ENCODE measurements at regions of chr20 and their contacts with region 1.

Region 1: DNA sequence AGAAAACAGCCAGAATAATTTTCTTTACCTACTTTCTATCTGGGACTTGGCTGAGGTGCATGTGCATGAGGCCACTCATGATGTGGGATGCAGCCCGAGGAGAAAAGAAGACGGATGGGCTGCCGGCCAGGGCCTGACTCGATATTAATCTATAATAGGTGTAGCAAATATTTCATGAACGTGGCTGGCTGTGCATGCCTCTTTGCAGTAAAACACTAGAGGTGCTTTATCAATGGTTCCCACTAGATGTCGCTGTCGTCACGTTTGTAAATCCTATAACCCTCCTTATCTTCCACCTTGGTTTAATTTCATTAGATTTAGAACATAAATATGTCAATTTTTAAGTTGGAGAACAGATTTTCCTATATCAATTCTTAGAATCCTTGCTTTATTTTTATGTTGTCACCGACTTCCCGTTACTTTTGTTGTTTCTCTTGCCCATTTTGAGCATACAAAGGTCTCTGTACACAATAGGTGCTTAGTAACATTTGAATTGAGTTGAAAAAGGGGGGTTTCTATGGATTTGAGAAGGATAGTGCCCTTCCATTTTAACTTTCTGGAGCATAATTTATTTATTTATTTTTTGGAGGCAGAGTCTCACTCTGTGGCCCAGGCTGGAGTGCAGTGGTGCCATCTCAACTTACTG is 19.6 kb upstream of the FERMT1 start:
- DNase-seq: peak; percentile 52
- H3K4me3 ChIP-seq: no peak overlapping the region
- H3K27ac ChIP-seq: no peak overlapping the region
- H3K4me1 ChIP-seq: no peaks in the 10 kb centered on the region
- H3K27me3 ChIP-seq: no peaks in the 10 kb centered on the region
- CTCF ChIP-seq: peak; percentile 70 to 88 (median 83)
- EP300 ChIP-seq: no peak
- POLR2A ChIP-seq: no peak

Region 2: DNA sequence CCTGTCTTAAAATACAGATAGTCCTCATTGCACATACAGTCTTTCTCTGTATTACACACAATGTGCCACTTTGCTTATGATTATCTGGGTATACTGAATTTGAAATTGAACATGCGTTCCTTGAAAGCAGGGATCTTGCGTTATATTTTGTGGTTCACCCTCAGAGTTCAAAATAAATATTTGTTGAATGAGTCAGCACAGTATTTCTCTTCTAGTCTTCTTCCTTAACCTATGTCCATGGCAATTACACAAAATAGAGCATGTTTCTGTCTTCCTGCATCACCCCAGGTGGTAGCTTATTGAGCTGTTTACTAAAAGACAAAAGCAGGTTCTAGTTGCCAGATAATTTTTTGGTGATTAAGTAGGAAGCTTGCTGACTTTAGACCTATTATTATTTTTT is 253.2 kb after region 1 on chr20:
- in situ Hi-C with region 1: no loop called
- intact Hi-C with region 1: loop called (anchors 5 kb)
- DNase-seq: no peak
- H3K4me3 ChIP-seq: no peak overlapping the region
- H3K27ac ChIP-seq: no peak overlapping the region
- H3K4me1 ChIP-seq: no peaks in the 10 kb centered on the region
- H3K27me3 ChIP-seq: no peaks in the 10 kb centered on the region
- CTCF ChIP-seq: no peak
- EP300 ChIP-seq: no peak
- POLR2A ChIP-seq: no peak

Region 3: GRCh38 chr20:6583134-6583738 is 440.8 kb after region 1 on chr20:
- in situ Hi-C with region 1: loop called in 1 of 4 experiments (anchors 25 kb)
- intact Hi-C with region 1: no loop called
- DNase-seq: peak; percentile 22
- H3K4me3 ChIP-seq: no peak overlapping the region
- H3K27ac ChIP-seq: no peak overlapping the region
- H3K4me1 ChIP-seq: no peaks in the 10 kb centered on the region
- H3K27me3 ChIP-seq: no peaks in the 10 kb centered on the region
- CTCF ChIP-seq: peak; percentile 53 to 68 (median 61)
- EP300 ChIP-seq: no peak
- POLR2A ChIP-seq: no peak

Region 4: DNA sequence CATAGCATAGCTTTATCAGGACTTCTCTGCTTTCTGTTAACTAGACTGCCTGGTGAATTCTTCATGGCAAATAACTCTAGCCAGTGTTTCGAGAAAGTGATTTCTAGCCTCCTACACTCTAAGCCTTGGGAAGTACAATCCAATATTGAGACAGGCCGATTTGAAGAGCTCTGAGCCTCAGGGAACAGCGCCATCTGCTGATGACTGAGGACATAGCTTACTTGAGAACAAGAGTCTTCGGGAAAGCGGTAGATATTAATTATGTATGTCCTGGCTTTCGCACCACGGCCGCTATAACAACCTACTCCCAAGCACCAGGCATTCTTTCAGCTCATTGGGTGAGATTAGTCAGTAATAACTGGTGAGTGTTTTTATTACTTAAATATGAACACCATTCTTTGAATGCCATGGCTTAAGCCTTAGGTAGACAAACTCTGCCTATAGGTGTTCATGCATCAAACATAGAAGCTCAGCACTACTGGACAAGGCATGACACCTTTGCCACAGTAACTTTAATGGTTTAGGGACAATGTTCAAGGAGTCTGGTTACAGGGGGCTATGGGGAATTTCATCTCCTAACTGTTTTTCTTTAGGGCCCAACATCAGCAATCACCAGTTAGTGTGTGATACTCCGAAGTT is 1143.6 kb after region 1 on chr20:
- in situ Hi-C with region 1: loop called in 1 of 4 experiments (anchors 10 kb)
- intact Hi-C with region 1: no loop called
- DNase-seq: peak; percentile 67
- H3K4me3 ChIP-seq: no peak overlapping the region
- H3K27ac ChIP-seq: no peak overlapping the region
- H3K4me1 ChIP-seq: no peaks in the 10 kb centered on the region
- H3K27me3 ChIP-seq: no peaks in the 10 kb centered on the region
- CTCF ChIP-seq: peak; percentile 59 to 83 (median 72)
- EP300 ChIP-seq: no peak
- POLR2A ChIP-seq: no peak